GM10248 (cell line): ENCODE measurements at regions of chr11 and their contacts with region 1.

Region 1: DNA sequence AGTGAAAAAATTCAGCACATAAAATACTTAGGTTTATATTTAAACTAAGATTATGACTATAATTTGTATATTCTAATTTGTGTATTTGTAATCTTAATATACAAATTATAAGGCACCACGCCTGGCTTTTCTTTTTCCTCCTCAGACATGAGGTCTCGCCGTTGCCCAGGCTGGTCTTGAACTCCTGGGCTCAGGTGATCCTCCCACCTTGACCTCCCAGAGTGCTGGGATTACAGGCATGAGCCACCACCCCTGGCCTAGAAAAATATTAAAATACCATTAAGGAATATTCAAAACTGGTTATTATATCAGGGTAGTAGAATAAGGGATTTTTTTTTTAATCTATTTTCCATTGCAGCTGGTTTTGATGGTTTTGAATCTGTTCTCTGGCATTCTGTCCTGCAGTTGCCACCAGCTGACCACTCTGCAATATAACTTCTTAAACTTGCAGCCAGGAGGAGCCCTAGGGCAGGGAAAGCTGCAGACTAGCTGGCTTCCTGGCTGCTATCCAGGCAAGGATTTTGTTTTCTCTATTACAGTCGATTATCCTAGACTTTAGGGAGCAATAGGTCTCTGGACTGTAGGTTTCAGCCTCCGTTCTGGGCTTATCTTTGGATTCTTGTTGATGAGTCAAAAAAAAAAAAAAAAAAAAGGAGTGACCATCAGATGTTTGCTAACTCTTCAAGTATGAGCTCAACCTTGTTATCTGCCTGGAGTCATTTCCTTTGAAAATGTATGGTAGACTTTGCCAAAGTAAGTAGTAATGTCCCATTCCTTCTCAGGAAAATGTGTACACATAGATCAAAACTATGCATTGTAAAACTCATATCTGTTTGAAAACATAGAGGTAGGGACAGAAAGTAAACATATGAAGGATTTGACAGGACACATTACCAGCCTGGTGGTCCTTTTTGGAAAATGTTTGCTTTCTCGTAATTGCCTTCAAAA is 13.2 kb downstream of the POLA2 start:
- DNase-seq: peak; percentile 55
- CTCF ChIP-seq: peak; percentile 84

Region 2: GRCh38 chr11:65213322-65214211 is 61.4 kb before region 1 on chr11:
- CTCF ChIA-PET with region 1: no interaction called
- POLR2A ChIA-PET with region 1: no interaction called
- DNase-seq: no peak
- CTCF ChIP-seq: no peak

Region 3: DNA sequence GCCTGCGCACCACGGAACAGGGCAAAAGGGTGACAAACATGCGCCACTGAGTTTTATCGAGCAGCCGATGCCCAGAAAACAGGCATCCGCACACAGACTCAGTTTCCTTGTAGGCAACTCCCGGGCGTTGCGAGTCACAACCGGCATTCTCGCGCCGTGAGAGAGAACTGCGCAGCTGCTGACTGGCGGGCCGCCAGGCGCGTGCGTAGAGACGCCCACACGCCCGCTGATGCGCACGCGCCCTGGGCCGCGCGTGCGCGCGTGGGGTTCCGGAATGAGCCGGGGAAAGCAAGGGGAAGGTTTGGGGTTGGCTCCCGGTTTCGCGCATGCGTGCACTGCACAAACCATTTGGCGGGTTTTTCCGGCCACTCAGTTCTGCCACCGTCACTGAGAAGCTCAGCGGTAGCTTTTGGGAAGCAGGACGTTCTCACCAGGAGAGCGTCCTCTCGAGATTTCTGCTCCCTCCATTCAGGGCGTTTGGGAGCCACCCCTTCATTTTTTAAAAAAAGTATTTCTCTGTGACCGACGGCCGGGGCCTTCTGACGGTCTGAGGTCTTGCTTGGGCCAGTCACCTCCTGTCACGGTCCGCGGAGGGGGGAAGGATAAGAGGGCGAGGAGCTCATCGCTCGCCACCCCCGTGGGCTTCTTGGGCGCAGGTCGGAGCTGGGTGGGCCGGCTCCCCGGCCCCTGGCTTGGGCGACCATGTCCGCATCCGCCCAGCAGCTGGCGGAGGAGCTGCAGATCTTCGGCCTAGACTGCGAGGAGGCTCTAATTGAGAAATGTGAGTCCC is 13.2 kb before region 1 on chr11 and contains the start of gene POLA2:
- CTCF ChIA-PET with region 1: interaction called, 49 read pairs
- POLR2A ChIA-PET with region 1: interaction called, 4 read pairs
- DNase-seq: peak; percentile 100
- CTCF ChIP-seq: no peak

Region 4: GRCh38 chr11:65290448-65291165 is 15.6 kb after region 1 on chr11:
- CTCF ChIA-PET with region 1: interaction called, 36 read pairs
- POLR2A ChIA-PET with region 1: no interaction called
- DNase-seq: no peak
- CTCF ChIP-seq: no peak